Ascending aorta (tissue), 2 donors: ENCODE measurements at regions of chr3 and their contacts with region 1.

Region 1: DNA sequence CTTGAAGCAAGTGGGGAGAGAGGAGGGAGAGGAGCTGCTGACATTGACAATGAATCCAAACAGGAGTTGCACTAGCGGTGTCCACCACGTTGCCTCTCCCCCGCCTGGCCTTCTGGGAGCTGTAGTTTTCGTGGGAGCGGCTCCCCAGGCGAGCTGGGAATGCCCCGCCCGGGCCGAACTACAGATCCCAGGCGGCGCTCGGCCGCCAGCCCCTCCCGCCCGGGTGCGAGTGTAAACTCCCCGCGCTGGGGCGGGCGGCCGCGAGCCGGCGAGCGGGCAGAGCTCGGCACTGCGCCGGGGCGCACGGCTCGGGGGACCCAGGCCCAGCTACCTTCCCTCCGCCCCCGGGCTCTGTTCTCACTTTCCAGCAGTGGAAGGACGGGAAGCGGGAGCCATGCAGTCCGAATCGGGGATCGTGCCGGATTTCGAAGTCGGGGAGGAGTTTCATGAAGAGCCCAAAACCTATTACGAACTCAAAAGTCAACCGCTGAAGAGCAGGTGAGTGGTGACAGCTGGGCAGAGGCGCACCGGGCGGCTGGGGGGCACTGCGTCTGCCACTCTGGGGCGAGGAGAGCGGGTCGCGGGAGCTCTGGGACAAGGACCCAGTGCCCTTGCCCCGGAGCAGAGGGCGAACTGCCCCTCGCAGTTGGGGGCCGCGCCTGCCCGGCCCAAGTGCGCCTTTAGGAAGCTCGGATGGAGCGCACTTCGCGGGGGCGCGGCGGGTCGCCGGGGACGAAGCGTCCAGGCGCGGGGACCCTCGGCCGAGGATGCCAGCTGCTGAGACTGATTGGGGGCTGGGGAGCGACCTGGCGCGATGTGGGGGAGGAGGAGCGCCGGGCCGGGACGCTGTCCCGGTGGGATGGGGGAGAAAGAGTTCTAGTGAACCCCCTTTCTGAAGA is at the start of gene MITF:
- DNase-seq: peak; percentile 76 to 96
- H3K4me3 ChIP-seq: peak within 1 kb of the TSS; percentile 92 to 100
- H3K27ac ChIP-seq: peak within 1 kb of the TSS; percentile 78 to 83
- H3K4me1 ChIP-seq: peaks cover 2 to 11% of the 10 kb centered on the region in 2 donors
- H3K27me3 ChIP-seq: no peaks in the 10 kb centered on the region
- CTCF ChIP-seq: no peak
- total RNA-seq, gene MITF: 27.4 TPM

Region 2: DNA sequence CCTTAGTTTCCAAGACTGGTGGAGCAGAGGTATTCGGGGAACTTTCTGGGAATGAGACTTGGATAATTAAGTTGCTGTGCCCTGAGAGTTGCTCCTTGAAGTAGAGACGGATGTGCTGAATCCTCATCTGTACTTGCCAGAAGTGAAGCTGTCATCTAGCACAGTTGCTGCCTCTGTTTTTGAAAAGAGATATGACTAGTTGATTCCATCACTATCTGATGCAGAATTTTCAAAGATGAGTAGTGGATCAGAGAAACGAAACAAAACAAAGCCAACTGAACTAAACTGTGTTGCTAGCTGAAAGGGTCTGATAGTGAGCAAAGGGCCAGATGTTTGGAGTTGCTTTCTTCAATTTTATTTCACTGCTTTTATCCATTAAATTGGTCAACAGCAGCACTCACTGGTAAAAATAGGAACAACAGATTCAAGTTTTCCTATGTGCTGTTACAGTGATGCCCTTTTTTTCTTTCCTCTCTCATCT is 52.5 kb after region 1 on chr3:
- intact Hi-C with region 1: loop called (anchors 2 kb)
- DNase-seq: no peak
- H3K4me3 ChIP-seq: no peak overlapping the region
- H3K27ac ChIP-seq: no peak overlapping the region
- H3K4me1 ChIP-seq: peaks cover 7 to 21% of the 10 kb centered on the region in 2 donors
- H3K27me3 ChIP-seq: no peaks in the 10 kb centered on the region
- CTCF ChIP-seq: peak; percentile 36 to 63 (median 53)